ENCODE measurements at regions of chr6 and their contacts with region 1.

Region 1: DNA sequence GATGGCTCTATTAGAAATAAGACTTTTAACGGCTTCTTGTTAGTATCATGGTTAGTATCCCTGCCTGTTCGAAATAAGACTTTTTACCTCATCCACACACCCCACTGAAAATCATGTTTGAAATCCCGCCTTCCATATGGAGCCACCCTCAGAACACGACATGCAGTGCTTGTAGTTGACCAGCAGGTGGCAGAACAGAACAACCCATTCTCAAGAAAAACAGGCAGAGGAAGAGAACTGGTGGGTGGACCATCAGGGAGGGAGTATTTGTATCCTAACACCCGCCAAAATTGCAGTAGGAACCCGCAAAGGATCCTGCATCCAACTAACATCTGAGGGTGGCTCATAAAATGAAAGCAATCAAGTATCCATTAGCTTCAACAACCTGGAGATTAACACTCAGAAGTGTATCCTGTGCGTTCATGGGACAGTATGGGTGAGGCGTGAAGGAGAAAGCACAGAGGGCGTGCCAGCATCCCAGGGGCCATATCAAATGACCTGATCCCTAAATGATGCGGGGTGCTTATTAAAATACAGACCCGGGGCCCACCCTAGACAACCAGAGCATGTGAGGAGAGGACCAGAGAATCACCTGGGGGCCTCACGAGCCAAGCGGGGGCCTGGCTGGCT is 89.6 kb upstream of the NHSL1 start:
- DNase-seq: peak; percentile 67
- ATAC-seq: peak; percentile 11
- H3K4me3 Mint-ChIP-seq: no peak overlapping the region
- H3K27ac Mint-ChIP-seq: no peak overlapping the region
- H3K4me1 Mint-ChIP-seq: peaks cover 28% of the 10 kb centered on the region
- H3K27me3 Mint-ChIP-seq: no peaks in the 10 kb centered on the region

Region 2: DNA sequence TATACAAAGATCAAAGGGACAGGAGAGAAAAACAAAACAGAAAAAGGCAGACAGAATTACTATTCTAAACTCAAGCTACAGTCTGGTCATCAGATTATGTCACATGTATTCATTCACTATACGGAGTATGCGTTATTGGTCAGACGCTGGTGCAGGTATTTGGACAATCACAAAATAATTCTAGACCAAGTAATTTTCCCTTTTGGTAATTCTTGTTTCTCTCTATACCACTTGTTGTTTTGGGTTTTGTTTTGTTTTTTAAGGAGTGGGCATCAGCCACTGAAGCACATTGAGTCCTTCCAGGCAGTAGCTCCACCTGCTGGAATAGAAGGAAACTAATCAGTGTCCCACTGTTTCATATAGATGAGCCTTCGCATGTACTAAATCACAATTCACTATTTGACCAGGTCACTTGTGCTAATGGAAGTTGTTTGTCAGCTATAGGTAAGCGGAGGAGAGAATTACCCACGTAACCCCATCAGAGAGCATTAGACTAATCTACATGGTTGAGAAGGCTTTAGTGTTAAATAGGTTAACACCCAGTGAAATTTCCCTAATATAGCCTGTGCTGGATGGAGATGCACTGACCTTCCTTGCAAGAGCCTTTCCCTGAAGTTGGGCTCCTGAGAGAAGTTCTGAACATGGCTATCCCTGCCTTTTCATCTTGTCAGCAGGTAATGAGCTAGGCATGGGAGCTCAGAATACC is 644.0 kb before region 1 on chr6:
- CTCF ChIA-PET with region 1: no interaction called
- POLR2A ChIA-PET with region 1: no interaction called
- intact Hi-C with region 1: no loop called
- DNase-seq: peak; percentile 36
- ATAC-seq: peak; percentile 37
- H3K4me3 Mint-ChIP-seq: no peak overlapping the region
- H3K27ac Mint-ChIP-seq: peak overlapping the region; percentile 23
- H3K4me1 Mint-ChIP-seq: peaks cover 52% of the 10 kb centered on the region
- H3K27me3 Mint-ChIP-seq: no peaks in the 10 kb centered on the region

Region 3: DNA sequence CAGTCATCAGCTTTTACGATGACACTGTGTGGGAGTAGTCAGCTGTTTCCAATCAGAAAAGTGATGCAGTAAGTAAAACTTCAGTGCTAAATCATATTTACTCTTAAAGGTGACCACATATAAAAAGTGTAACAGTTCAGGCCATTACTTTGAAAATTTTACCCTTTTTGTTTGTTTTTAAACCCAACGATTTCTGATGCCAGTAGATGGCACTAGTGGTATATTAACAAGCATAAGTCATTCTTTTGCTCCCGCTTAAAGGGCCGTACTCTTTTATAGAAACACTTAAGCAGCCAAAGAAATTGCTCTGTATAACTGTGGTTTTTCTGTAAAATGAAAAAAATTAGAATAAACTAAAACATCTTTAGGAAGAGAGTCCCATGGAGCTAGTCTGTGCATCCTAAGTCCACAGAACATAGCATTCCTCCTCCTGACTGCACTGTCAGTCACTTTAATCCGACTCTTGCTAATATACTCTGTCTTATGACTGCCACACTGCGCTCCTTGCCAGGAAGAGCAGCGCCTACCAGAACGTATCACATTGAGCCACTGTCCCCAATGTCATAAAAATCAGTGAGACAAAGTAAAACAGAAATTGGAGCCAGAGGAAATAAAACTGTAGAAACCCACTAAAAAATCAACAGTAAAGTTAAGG is 159.8 kb before region 1 on chr6:
- CTCF ChIA-PET with region 1: no interaction called
- POLR2A ChIA-PET with region 1: no interaction called
- intact Hi-C with region 1: loop called in 1 of 2 experiments (anchors 2 kb)
- DNase-seq: no peak
- ATAC-seq: peak; percentile 39
- H3K4me3 Mint-ChIP-seq: no peak overlapping the region
- H3K27ac Mint-ChIP-seq: no peak overlapping the region
- H3K4me1 Mint-ChIP-seq: no peaks in the 10 kb centered on the region
- H3K27me3 Mint-ChIP-seq: no peaks in the 10 kb centered on the region

Region 4: DNA sequence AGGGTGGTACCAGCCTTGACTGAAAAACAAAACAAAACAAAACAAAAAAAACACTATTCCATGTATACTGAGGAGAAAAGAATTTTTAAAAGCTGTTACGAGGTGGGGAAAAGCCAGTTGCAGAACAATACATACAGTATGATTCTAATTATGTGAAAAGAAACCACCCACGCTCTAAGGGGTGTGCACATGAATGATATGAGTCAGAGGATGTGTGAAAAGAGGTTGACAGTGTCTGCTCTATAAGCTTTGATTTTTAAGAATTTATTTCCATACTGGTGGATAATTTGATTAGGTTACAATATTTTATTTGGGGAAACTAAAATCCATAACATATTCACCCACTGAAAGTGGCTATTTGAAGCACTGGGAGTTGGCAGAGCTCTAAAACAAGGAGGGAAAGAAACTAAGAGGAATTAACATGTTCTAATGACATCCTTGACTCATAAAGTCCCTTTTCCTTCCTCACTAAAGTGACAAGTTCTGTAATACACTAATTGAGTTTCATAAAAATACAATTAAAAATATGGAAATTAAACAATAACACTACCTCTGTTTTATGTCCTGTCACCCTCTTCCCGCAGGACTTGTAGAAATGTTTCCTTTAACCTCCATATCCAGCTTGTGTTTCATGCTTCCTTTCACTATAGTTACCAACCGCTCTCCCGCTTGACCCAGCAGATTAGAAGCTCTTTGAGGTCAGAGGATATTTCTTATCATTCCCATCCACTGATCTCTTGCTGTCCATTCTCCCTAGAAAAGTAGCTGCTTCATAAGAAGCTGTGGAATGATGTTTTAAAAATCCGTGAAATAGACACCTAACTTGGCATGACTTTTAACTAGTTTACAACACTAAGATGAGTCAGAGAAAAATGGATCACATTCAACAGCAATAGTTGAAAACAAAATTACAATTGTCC is 66.1 kb after region 1 on chr6:
- CTCF ChIA-PET with region 1: interaction called, 3 read pairs
- POLR2A ChIA-PET with region 1: no interaction called
- intact Hi-C with region 1: loop called (anchors 1 to 5 kb)
- DNase-seq: peak; percentile 66
- ATAC-seq: peak; percentile 98
- H3K4me3 Mint-ChIP-seq: no peak overlapping the region
- H3K27ac Mint-ChIP-seq: no peak overlapping the region
- H3K4me1 Mint-ChIP-seq: peaks cover 21% of the 10 kb centered on the region
- H3K27me3 Mint-ChIP-seq: peaks cover 17% of the 10 kb centered on the region

Region 5: DNA sequence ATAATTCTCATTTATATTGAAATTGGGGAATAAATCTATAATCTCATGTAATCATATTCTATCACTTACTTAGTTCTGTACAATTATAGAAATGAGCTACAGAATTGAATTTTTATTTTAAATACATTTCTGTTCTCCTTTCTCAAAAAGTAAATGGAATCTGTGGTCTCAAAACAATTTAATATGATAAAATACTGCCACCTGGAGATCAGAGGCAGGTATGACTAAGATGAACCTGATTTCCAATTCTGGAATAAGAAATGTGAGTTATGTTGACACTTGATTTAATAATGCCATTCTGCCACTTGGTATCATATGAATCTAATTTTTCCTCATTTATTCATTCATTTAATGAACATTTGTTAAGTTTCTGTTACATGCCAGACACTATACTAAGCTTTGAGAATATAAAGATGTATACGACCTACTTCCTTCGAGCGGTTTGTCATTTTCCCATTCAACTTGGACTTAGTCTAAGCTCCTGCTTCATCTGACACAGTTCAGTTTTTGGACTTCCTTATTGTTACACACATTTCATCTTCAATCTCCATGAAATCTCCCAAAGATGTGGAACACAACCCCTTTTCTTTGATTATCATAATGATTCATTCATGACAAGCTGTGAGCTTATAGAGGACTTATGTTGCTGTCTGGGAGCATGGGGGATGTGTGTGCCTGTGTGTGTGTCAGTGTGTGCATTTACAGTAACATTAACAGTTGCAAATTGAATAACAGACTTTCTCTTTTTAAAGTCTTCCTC is 177.2 kb after region 1 on chr6:
- CTCF ChIA-PET with region 1: interaction called, 60 read pairs
- POLR2A ChIA-PET with region 1: no interaction called
- intact Hi-C with region 1: loop called (anchors 1 kb)
- DNase-seq: no peak
- ATAC-seq: no peak
- H3K4me3 Mint-ChIP-seq: no peak overlapping the region
- H3K27ac Mint-ChIP-seq: no peak overlapping the region
- H3K4me1 Mint-ChIP-seq: peaks cover 14% of the 10 kb centered on the region
- H3K27me3 Mint-ChIP-seq: no peaks in the 10 kb centered on the region

Region 6: DNA sequence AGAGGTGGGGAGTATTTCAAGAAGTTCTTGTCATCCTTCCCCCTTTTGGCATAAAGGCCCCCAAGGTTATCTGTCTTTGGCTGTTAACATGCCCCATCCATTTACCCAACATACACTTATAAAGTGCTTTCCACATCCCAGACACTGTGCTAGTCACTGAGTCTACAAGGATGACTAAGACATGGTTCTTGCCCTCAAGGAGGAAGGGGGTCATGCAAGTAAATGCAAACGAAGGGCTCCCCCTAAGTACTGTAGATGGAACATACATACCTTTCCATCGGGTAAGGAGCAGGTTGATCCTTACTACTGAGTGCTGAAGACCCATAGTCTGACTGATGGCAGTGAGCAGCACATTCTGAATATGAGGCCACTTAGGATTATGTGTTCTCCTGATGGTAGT is 584.3 kb after region 1 on chr6:
- CTCF ChIA-PET with region 1: no interaction called
- POLR2A ChIA-PET with region 1: no interaction called
- intact Hi-C with region 1: loop called in 1 of 2 experiments (anchors 2 kb)
- DNase-seq: no peak
- ATAC-seq: peak; percentile 89
- H3K4me3 Mint-ChIP-seq: no peak overlapping the region
- H3K27ac Mint-ChIP-seq: peak overlapping the region; percentile 87
- H3K4me1 Mint-ChIP-seq: peaks cover 91% of the 10 kb centered on the region
- H3K27me3 Mint-ChIP-seq: no peaks in the 10 kb centered on the region

Measured in activated CD4-positive, alpha-beta T cell treated with anti-CD3 and anti-CD28 coated beads for 36 hours (primary cell).